H1 (cell line): ENCODE measurements at regions of chr1 and their contacts with region 1.

Region 1: GRCh38 chr1:100051401-100051800 is 81.3 kb downstream of the SASS6 start:
- DNase-seq: no peak
- H3K4me3 ChIP-seq: no peak overlapping the region
- H3K27ac ChIP-seq: no peak overlapping the region
- H3K4me1 ChIP-seq: peaks cover 0 to 6% (median 4%) of the 10 kb centered on the region in 4 experiments; a peak in 2 of 7 replicates
- H3K27me3 ChIP-seq: no peaks in the 10 kb centered on the region
- CTCF ChIP-seq: no peak
- EP300 ChIP-seq: no peak
- POLR2A ChIP-seq: no peak
- RAD21 ChIP-seq: no peak

Region 2: DNA sequence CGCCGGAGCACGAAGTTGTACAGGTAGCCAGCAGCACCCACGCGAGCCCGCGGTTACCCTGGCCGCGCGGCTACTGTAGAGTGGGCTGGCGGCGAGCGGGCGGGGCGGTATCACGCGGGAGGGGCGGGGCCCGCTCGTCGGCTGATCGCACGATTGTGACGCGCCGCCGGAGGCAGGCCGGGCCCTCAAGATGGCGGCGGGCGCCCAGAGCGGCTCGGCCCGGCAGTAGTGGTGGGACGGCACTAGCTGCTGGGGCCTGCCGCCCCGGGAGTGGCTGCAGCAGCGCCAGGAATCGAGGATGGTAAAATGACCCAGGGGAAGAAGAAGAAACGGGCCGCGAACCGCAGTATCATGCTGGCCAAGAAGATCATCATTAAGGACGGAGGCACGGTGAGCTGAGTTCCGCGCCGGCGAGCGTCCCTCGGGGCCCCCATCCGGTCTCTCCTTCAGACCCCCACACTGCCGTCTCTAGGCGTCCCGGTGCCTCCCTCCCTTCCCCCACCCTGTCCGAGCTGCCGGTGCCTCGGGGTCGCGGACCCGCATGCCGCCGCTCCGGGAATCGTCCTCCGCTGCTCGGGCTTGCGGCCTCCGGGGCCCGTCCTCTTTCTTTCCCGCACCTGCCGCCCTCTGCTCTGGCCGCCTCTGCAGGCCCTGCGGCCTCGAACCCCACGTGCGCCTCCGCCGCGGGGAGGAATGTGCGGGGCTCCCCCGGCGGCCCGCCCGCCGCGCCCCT is 13.3 kb before region 1 on chr1:
- CTCF ChIA-PET with region 1: interaction called, 4 read pairs
- POLR2A ChIA-PET with region 1: interaction called, 13 read pairs
- DNase-seq: peak; percentile 46 to 87
- H3K4me3 ChIP-seq: peak overlapping the region; percentile 95 to 98 (median 98)
- H3K27ac ChIP-seq: peak overlapping the region; percentile 97
- H3K4me1 ChIP-seq: no peaks in the 10 kb centered on the region
- H3K27me3 ChIP-seq: no peaks in the 10 kb centered on the region
- CTCF ChIP-seq: no peak
- EP300 ChIP-seq: no peak
- POLR2A ChIP-seq: peak; percentile 94
- RAD21 ChIP-seq: no peak

Region 3: DNA sequence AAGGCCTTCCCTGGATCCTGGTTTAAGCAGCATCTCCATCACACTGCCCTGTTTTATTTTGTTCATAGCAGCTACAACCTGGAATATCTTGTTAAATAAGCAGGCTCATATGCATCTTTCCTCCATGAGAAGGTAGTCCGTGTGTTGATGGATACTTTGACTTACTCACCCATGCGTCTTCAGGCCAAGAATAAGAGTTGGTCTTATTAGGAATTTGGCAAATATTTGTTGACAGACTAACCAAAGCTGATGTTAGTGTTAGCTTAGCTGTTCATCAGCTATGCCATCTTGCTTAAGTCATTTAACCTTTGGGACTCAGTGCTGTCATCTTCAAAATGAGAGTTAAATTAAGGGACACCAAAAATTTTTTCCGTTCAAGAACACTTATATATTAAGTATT is 22.1 kb after region 1 on chr1:
- CTCF ChIA-PET with region 1: no interaction called
- POLR2A ChIA-PET with region 1: no interaction called
- DNase-seq: no peak
- H3K4me3 ChIP-seq: no peak overlapping the region
- H3K27ac ChIP-seq: no peak overlapping the region
- H3K4me1 ChIP-seq: no peaks in the 10 kb centered on the region; a peak in 1 of 7 replicates
- H3K27me3 ChIP-seq: no peaks in the 10 kb centered on the region
- CTCF ChIP-seq: no peak
- EP300 ChIP-seq: no peak
- POLR2A ChIP-seq: no peak
- RAD21 ChIP-seq: no peak

Region 4: DNA sequence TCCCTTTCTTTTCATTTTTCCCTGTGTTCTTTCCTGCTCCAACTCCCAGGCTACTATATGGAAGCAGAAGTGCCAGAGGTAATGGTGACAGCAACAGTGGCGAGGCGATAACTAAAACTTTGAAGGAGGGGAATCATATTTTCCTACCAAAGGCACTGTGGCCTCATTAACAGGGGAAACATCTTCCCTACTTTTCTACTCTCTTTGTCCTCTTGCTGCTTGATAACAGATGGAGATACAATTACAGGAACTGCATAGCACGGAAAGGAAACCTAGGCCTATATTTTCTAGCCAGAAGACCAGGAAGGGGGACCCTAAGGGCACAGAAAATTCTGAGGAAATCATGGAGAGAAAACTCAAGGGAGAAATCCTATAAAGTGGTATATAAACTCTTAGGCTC is 39.1 kb after region 1 on chr1:
- CTCF ChIA-PET with region 1: no interaction called
- POLR2A ChIA-PET with region 1: no interaction called
- DNase-seq: no peak
- H3K4me3 ChIP-seq: no peak overlapping the region
- H3K27ac ChIP-seq: no peak overlapping the region
- H3K4me1 ChIP-seq: peaks cover 0 to 4% (median 0%) of the 10 kb centered on the region in 4 experiments; a peak in 1 of 7 replicates
- H3K27me3 ChIP-seq: no peaks in the 10 kb centered on the region
- CTCF ChIP-seq: no peak
- EP300 ChIP-seq: no peak
- POLR2A ChIP-seq: no peak
- RAD21 ChIP-seq: no peak